H1 (cell line): ENCODE measurements at regions of chr1 and their contacts with region 1.

Region 1: GRCh38 chr1:43134068-43134467 is 38.0 kb downstream of the EBNA1BP2 start:
- DNase-seq: no peak
- H3K4me3 ChIP-seq: no peak overlapping the region
- H3K27ac ChIP-seq: no peak overlapping the region
- H3K4me1 ChIP-seq: no peaks in the 10 kb centered on the region
- H3K27me3 ChIP-seq: no peaks in the 10 kb centered on the region
- CTCF ChIP-seq: no peak
- EP300 ChIP-seq: no peak
- POLR2A ChIP-seq: no peak
- RAD21 ChIP-seq: no peak

Region 2: GRCh38 chr1:43121256-43121900 is 12.7 kb before region 1 on chr1:
- CTCF ChIA-PET with region 1: no interaction called
- POLR2A ChIA-PET with region 1: interaction called, 12 read pairs
- DNase-seq: no peak
- H3K4me3 ChIP-seq: peak overlapping the region in 2 of 4 experiments; percentile 37 to 57; a peak in 3 of 8 replicates
- H3K27ac ChIP-seq: no peak overlapping the region
- H3K4me1 ChIP-seq: 0 out of 7 replicates have a peak, but pooled peaks cover 0 to 1% (median 0%) of the 10 kb centered on the region in 4 experiments
- H3K27me3 ChIP-seq: no peaks in the 10 kb centered on the region
- CTCF ChIP-seq: no peak
- EP300 ChIP-seq: no peak
- POLR2A ChIP-seq: no peak
- RAD21 ChIP-seq: no peak

Region 3: DNA sequence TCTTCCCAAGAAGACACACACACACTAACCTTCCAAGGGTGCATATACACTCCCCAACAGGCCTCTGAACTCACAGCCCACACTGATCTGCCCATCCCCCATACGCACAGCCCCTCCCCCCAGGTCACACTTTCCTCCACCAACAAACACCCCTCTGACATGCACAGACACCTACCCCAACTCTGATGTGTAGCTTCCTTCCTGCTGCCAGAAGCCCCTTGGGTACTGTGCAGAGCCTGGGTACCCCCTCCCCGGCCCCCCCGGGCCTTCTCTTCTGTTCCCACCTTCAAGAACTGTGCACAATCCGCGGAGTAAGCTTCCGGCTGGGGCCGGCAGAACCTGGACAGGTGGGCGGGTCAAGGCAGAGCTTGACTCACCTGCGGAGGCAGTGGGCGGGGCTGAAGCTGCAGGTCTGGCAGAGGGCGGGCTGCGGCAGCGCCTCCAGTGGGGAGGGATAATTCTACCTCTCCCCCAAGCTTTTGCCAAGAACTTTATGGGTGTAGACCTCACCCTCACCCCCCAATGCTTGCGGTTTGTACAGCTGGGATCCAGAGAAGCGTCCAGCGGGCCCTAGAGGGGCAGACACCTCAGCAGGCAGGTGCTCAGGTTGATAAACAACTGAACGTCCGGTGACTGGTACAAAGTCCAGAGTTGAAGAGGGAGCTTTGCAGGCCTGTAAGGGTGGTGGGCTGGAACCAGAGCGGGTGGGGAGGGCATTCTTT is 151.4 kb after region 1 on chr1 and contains the start of gene C1orf210:
- CTCF ChIA-PET with region 1: no interaction called
- POLR2A ChIA-PET with region 1: no interaction called
- DNase-seq: peak; percentile 71 to 93
- H3K4me3 ChIP-seq: peak within 1 kb of the TSS; percentile 41 to 64 (median 60)
- H3K27ac ChIP-seq: peak within 1 kb of the TSS; percentile 7; the same call in 1 of the 2 replicates
- H3K4me1 ChIP-seq: peaks cover 0 to 15% (median 12%) of the 10 kb centered on the region in 4 experiments; a peak in 6 of 7 replicates
- H3K27me3 ChIP-seq: no peaks in the 10 kb centered on the region; a peak in 1 of 7 replicates
- CTCF ChIP-seq: peak; percentile 58 to 71 (median 68)
- EP300 ChIP-seq: no peak
- POLR2A ChIP-seq: no peak; a peak in 1 of 3 replicates
- RAD21 ChIP-seq: peak; percentile 38 to 40; a peak in 2 of 4 replicates
- total RNA-seq, gene C1orf210: 10.6 and 12.0 TPM in 2 replicates